Esophagus squamous epithelium (tissue), 5 donors: ENCODE measurements at regions of chr1 and their contacts with region 1.

Region 1: DNA sequence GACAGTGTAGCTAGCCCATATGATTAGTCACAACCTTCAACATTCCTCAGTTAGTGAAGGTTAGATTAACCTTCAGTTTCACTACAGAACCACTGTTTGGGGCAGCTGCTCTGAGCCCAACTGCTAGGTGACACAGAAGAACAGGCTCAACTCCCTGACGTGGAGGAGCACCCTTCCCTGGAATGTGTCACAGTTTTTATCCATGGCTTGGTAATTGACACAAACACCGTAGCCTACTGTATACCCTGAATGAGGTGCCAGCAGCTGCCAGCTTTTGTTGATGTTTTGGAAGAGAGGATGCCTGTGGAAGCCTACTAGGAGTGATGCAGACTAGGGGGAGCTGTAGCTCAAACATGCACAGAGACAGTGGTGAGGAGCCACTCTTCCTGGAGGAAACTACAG is 56.6 kb upstream of the CR2 start:
- DNase-seq: no peak
- H3K4me3 ChIP-seq: no peak overlapping the region
- H3K27ac ChIP-seq: no peak overlapping the region
- H3K4me1 ChIP-seq: no peaks in the 10 kb centered on the region
- H3K27me3 ChIP-seq: no peaks in the 10 kb centered on the region
- CTCF ChIP-seq: no peak
- POLR2A ChIP-seq: no peak

Region 2: DNA sequence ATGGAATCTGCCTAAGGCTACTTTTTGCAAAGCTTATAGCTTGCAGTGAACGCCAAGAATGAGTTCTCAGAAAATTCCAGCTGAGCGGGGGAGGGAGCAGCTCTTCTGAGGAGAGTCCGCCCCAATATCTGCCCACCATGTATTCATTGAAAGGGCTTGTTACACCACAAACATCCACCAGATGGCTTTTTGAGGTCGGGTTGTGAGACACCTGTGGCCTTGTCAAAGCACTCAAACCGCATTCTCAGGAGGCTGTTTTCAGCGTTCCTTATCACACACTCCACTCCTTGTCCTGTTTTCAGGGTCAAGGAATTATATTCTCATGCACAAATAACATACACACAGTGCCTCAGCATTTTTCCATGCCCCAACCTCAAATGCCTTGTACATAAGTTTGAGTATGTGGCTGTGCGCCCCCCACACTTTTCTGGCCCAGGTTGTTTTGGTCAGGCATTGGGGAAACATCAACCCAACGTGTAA is 312.8 kb before region 1 on chr1:
- intact Hi-C with region 1: loop called (anchors 5 kb)
- DNase-seq: no peak
- H3K4me3 ChIP-seq: no peak overlapping the region
- H3K27ac ChIP-seq: no peak overlapping the region
- H3K4me1 ChIP-seq: no peaks in the 10 kb centered on the region
- H3K27me3 ChIP-seq: no peaks in the 10 kb centered on the region
- CTCF ChIP-seq: peak; percentile 48 to 75 (median 72)
- POLR2A ChIP-seq: no peak

Region 3: DNA sequence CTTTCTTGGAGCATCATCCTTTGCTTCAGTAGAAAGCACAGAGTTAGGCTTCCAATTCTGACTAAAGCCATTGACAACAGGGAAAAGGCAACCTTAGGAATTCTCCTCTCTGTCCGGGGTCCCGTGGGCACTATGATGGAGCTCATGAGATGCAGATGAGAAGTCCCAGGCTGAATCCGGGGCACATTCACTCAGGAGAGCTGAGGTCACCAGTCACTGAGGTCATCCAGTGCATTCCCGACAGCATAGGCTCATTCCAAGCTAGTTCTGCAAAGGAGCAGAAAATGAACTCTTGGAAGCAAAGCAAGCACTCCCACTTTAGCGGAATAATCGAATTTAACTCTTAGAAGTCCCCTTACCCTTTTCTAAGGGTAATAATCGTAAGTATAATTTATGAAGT is 105.2 kb after region 1 on chr1:
- intact Hi-C with region 1: no loop called
- DNase-seq: no peak
- H3K4me3 ChIP-seq: no peak overlapping the region
- H3K27ac ChIP-seq: no peak overlapping the region
- H3K4me1 ChIP-seq: no peaks in the 10 kb centered on the region
- H3K27me3 ChIP-seq: peaks cover 0 to 58% (median under 1%) of the 10 kb centered on the region in 4 donors
- CTCF ChIP-seq: no peak
- POLR2A ChIP-seq: no peak